Astrocyte of the cerebellum (primary cell): ENCODE measurements at regions of chr7 and their contacts with region 1.

Region 1: GRCh38 chr7:102942181-102942866 is 29.5 kb downstream of the LRRC17 start:
- DNase-seq: no peak
- H3K4me3 ChIP-seq: no peak overlapping the region
- CTCF ChIP-seq: no peak

Region 2: GRCh38 chr7:102387064-102387463 is 555.3 kb before region 1 on chr7:
- in situ Hi-C with region 1: no loop called
- DNase-seq: no peak
- H3K4me3 ChIP-seq: no peak overlapping the region
- CTCF ChIP-seq: no peak

Region 3: GRCh38 chr7:102874166-102874829 is 68.0 kb before region 1 on chr7:
- in situ Hi-C with region 1: no loop called
- DNase-seq: peak; percentile 83
- H3K4me3 ChIP-seq: no peak overlapping the region
- CTCF ChIP-seq: no peak

Region 4: DNA sequence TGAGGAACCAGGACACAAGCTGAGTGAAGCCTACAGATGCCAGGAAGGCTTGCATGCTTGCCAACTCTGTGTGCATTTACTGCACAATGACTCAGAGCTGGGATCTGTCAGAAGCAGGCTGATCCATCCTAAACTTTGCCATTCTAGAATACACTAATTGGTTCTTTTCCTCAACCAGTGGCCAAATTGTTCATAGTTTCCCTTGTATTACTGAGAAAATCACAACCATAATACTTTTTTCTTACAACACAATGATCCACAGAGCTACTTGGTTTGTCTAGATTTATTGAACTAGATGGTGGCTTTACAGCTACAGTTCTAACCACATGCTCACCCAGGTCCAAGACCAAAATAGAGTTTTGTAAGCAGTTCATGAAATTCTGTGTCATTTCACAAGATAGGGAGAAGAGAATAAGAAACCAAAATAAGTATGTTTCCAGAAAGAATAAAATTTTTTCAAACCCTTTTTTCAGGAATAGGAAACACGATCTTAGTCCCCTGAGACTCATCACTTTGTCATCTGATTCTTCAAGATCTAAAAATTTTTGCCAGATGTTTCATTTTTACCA is 50.5 kb before region 1 on chr7:
- in situ Hi-C with region 1: loop called (anchors 5 kb)
- DNase-seq: peak; percentile 92
- H3K4me3 ChIP-seq: no peak overlapping the region
- CTCF ChIP-seq: no peak

Region 5: GRCh38 chr7:103031781-103032180 is 89.5 kb after region 1 on chr7:
- in situ Hi-C with region 1: no loop called
- DNase-seq: no peak
- H3K4me3 ChIP-seq: no peak overlapping the region
- CTCF ChIP-seq: no peak